H1 (cell line): ENCODE measurements at regions of chr15 and their contacts with region 1.

Region 1: GRCh38 chr15:26242565-26243071 is 379.5 kb upstream of the ATP10A start:
- DNase-seq: peak; percentile 61 to 65
- H3K4me3 ChIP-seq: peak overlapping the region in 1 of 4 experiments; percentile 2; a peak in 1 of 8 replicates
- H3K27ac ChIP-seq: peak overlapping the region; percentile 90
- H3K4me1 ChIP-seq: peaks cover 8 to 18% (median 11%) of the 10 kb centered on the region in 4 experiments
- H3K27me3 ChIP-seq: peaks cover 0 to 2% (median 0%) of the 10 kb centered on the region in 4 experiments; a peak in 1 of 7 replicates
- CTCF ChIP-seq: peak in 2 of 3 experiments; percentile 12 to 20; a peak in 2 of 4 replicates
- EP300 ChIP-seq: peak in 1 of 2 experiments; percentile 58; a peak in 1 of 3 replicates
- POLR2A ChIP-seq: peak in 1 of 2 experiments; percentile 78; a peak in 2 of 3 replicates
- RAD21 ChIP-seq: peak; percentile 25 to 27

Region 2: DNA sequence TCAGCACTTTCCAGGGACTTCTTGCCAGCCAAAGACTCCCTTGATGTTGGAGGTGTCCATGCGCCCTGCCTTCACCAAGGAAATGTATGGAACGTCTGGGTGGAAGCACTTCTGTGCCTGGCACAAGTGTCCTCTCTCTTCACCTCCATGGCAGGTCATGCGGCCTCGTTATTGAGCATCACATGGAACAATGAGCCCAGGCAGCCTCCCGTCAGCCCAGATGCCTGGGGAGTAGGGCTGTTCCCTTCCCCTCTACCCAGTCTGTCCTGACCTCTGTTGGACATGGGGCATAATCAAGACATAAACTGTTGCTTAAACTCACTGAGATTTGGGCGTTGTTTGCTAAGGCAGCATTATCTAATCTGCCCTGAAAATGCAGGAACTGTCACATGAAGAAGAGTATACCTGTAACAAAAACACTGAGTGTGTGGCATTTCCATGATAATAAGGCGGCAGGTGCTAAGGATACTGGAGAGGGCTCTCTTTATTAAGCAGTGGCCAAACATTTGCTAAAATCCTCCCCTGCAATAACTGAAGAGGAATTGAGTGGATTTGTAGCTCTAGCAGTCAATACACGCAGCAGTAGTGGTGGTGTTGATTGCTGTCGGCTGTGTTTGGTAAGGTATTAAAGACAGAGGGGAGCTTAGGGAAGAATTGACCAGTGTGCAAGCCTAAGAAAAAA is 41.3 kb before region 1 on chr15:
- CTCF ChIA-PET with region 1: no interaction called
- POLR2A ChIA-PET with region 1: interaction called, 10 read pairs
- DNase-seq: no peak
- H3K4me3 ChIP-seq: no peak overlapping the region; a peak in 1 of 8 replicates
- H3K27ac ChIP-seq: no peak overlapping the region
- H3K4me1 ChIP-seq: peaks cover 8 to 19% (median 14%) of the 10 kb centered on the region in 4 experiments
- H3K27me3 ChIP-seq: peaks cover 0 to 8% (median 0%) of the 10 kb centered on the region in 4 experiments; a peak in 3 of 7 replicates
- CTCF ChIP-seq: no peak
- EP300 ChIP-seq: no peak
- POLR2A ChIP-seq: no peak
- RAD21 ChIP-seq: no peak